Activated T-helper 2 cell treated with anti-CD3 and anti-CD28 coated beads, Interferon-gamma antibody, Interleukin-2, Interleukin-4, amounts not matched to agents 10 μg/mL and 5 μg/mL and 100 μg/mL, durations not matched to agents 14 hours and 24 hours and 36 hours (primary cell): ENCODE measurements at regions of chrX and their contacts with region 1.

Region 1: GRCh38 chrX:1537035-1537715 is at the start of gene P2RY8:
- DNase-seq: peak; percentile 77
- H3K4me3 Mint-ChIP-seq: peak within 1 kb of the TSS; percentile 94
- H3K27ac Mint-ChIP-seq: peak within 1 kb of the TSS; percentile 99
- H3K4me1 Mint-ChIP-seq: peaks cover 14% of the 10 kb centered on the region
- H3K27me3 Mint-ChIP-seq: no peaks in the 10 kb centered on the region
- total RNA-seq, gene P2RY8: 33.1 and 34.5 TPM in 2 replicates

Region 2: GRCh38 chrX:1453951-1454785 is 83.0 kb before region 1 on chrX:
- intact Hi-C with region 1: loop called (anchors 1 kb)
- DNase-seq: peak; percentile 83
- H3K4me3 Mint-ChIP-seq: peak overlapping the region; percentile 60
- H3K27ac Mint-ChIP-seq: no peak overlapping the region
- H3K4me1 Mint-ChIP-seq: peaks cover 9% of the 10 kb centered on the region
- H3K27me3 Mint-ChIP-seq: no peaks in the 10 kb centered on the region

Region 3: GRCh38 chrX:1468250-1468772 is 68.9 kb before region 1 on chrX:
- intact Hi-C with region 1: loop called (anchors 1 kb)
- DNase-seq: peak; percentile 72
- H3K4me3 Mint-ChIP-seq: peak overlapping the region; percentile 60
- H3K27ac Mint-ChIP-seq: peak overlapping the region; percentile 94
- H3K4me1 Mint-ChIP-seq: peaks cover 72% of the 10 kb centered on the region
- H3K27me3 Mint-ChIP-seq: no peaks in the 10 kb centered on the region

Region 4: DNA sequence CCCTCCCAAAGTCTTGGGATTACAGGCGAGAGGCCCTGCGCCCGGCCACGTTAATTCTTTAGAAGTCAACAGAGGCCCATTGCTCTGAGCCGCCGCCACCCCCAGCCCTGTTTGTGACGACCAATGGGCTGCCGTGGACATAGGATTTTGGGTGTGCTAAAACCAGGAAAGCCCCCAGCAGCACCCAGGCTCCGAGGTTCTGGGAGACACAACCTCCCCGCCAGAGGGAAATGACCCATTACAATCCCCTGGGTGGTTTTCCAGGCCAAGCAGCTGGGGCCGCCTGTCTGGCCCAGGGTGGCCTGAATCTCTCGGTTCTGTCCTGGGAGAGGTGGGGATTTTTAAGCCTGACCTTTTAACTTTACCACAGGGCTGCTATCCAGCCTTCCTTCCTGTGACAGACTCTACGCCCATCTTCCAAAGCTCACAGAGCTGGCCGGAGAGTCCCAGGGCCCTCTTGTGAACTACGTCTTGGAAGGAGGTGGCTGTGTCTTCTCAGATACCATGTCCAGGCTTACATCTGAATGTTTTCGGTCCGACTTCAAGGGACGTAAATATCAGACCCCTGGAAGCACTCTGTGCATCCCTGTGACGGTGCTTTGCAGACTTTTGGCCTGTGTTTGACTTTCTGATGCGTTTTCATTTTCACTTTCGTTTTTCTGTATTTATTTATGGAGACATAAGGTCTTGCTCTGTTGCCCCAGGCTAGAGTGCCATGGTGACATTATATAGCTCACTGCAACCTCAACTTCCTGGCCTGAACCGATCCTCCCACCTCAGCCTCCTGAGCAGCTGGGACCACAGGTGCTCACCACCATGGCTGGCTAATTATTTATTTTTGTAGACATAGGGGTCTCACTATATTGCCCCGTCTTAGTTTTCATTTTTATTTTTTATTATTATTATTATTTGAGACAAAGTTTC is 36.2 kb before region 1 on chrX:
- intact Hi-C with region 1: loop called (anchors 5 kb)
- DNase-seq: peak; percentile 4
- H3K4me3 Mint-ChIP-seq: no peak overlapping the region
- H3K27ac Mint-ChIP-seq: peak overlapping the region; percentile 63
- H3K4me1 Mint-ChIP-seq: peaks cover 23% of the 10 kb centered on the region
- H3K27me3 Mint-ChIP-seq: no peaks in the 10 kb centered on the region

Region 5: GRCh38 chrX:1580735-1581531 is 43.8 kb after region 1 on chrX:
- intact Hi-C with region 1: loop called (anchors 2 kb)
- DNase-seq: peak; percentile 69
- H3K4me3 Mint-ChIP-seq: no peak overlapping the region
- H3K27ac Mint-ChIP-seq: peak overlapping the region; percentile 3
- H3K4me1 Mint-ChIP-seq: peaks cover 15% of the 10 kb centered on the region
- H3K27me3 Mint-ChIP-seq: no peaks in the 10 kb centered on the region

Region 6: GRCh38 chrX:1649621-1650020 is 112.4 kb after region 1 on chrX:
- intact Hi-C with region 1: no loop called
- DNase-seq: no peak
- H3K4me3 Mint-ChIP-seq: no peak overlapping the region
- H3K27ac Mint-ChIP-seq: no peak overlapping the region
- H3K4me1 Mint-ChIP-seq: peaks cover 4% of the 10 kb centered on the region
- H3K27me3 Mint-ChIP-seq: no peaks in the 10 kb centered on the region

Region 7: GRCh38 chrX:1824855-1825254 is 287.7 kb after region 1 on chrX:
- intact Hi-C with region 1: no loop called
- DNase-seq: no peak
- H3K4me3 Mint-ChIP-seq: no peak overlapping the region
- H3K27ac Mint-ChIP-seq: no peak overlapping the region
- H3K4me1 Mint-ChIP-seq: no peaks in the 10 kb centered on the region
- H3K27me3 Mint-ChIP-seq: no peaks in the 10 kb centered on the region